ENCODE measurements at regions of chr6 and their contacts with region 1.

Region 1: GRCh38 chr6:13873285-13874190 is 51.2 kb upstream of the RNF182 start:
- DNase-seq: peak; percentile 88 to 90 (median 89)
- ATAC-seq: peak; percentile 95
- H3K4me3 ChIP-seq: peak overlapping the region; percentile 23
- H3K27ac ChIP-seq: no peak overlapping the region; the same call in 2 of the 3 replicates
- H3K4me1 ChIP-seq: peaks cover 9 to 10% of the 10 kb centered on the region in 2 experiments; a peak in 4 of 5 replicates
- H3K27me3 ChIP-seq: no peaks in the 10 kb centered on the region
- CTCF ChIP-seq: peak; percentile 93 to 99 (median 96)
- EP300 ChIP-seq: no peak; the same call in 1 of the 2 replicates
- POLR2A ChIP-seq: 0 out of 2 replicates have a peak, but pooled peaks have one; percentile 39
- RAD21 ChIP-seq: peak; percentile 53 to 81

Region 2: DNA sequence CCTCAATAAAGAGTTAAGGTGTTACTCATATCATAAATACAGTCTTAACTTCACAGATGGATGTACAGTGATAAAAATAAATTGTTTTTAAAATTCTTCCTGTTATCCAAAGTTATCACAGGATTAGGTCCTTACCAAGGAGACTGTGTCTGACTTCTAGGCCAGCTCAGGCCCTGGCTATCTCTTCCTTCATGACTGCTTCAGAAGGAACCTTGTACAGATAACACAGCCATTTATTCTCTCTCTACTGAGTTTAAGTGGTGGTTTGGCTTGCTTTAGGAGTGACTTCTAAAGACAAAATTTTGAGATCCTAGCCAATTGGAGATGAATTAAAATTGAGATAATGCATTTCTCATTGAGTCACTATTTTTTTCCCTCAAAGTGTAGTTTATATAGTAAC is 10.4 kb after region 1 on chr6:
- CTCF ChIA-PET with region 1: no interaction called
- POLR2A ChIA-PET with region 1: interaction called, 11 read pairs
- in situ Hi-C with region 1: no loop called
- intact Hi-C with region 1: no loop called
- DNase-seq: peak in 2 of 4 experiments; percentile 37 to 60
- ATAC-seq: peak; percentile 85
- H3K4me3 ChIP-seq: no peak overlapping the region
- H3K27ac ChIP-seq: no peak overlapping the region
- H3K4me1 ChIP-seq: peaks cover 0 to 5% of the 10 kb centered on the region in 2 experiments; a peak in 2 of 5 replicates
- H3K27me3 ChIP-seq: no peaks in the 10 kb centered on the region
- CTCF ChIP-seq: no peak
- EP300 ChIP-seq: no peak
- POLR2A ChIP-seq: no peak
- RAD21 ChIP-seq: no peak

Measured in K562 (cell line).